Naive thymus-derived CD4-positive, alpha-beta T cell (primary cell): ENCODE measurements at regions of chr14 and their contacts with region 1.

Region 1: DNA sequence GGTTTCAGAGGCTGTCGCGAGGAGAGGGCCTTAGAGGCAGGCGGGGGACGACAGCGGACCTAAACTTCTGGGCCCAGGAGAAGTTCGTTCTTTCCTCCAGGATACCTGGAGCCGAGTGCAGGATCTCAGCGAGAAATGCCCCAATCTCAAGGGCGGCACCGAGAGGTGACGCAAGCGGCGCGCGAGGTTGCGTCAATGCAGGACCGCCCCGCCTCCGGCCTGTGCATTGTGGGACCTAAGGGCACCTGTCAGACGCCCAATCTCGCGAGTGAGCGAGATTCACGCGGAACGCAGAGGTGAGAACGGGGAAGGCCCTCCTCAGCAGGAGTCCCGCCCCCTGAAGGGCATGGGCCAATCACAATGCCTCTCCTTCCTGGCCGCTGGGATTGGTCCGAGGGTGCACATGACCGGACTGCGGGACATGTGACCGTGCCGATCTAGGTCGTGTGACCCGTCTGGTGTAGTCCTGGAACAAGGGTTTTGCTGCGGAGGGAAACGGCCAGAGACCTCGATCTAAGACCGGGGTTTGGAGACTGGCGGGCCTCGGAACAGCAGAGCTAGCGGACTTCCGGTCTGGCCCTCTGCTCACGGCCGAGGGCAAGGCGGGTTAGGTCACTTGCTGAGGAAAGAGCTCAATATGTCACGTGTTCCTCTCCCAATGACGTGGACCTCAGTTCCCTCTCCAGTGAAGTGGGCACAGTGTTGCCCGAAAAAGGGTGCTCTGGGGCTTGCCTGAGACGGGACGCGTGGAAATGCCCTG is 16.3 kb upstream of the DYNC1H1 start:
- DNase-seq: peak; percentile 95 to 100 (median 99)
- ATAC-seq: peak; percentile 97
- H3K4me3 ChIP-seq: peak overlapping the region; percentile 96
- H3K4me3 Mint-ChIP-seq: peak overlapping the region; percentile 86 to 99 (median 98)
- H3K27ac ChIP-seq: peak overlapping the region; percentile 99
- H3K27ac Mint-ChIP-seq: peak overlapping the region; percentile 97 to 100 (median 99)
- H3K4me1 ChIP-seq: peaks cover 9 to 10% of the 10 kb centered on the region in 2 donors
- H3K4me1 Mint-ChIP-seq: peaks cover 17 to 34% (median 25%) of the 10 kb centered on the region in 7 donors
- H3K27me3 ChIP-seq: no peaks in the 10 kb centered on the region
- H3K27me3 Mint-ChIP-seq: peaks cover 15 to 37% (median 30%) of the 10 kb centered on the region in 5 donors

Region 2: GRCh38 chr14:101721951-101722661 is 226.0 kb before region 1 on chr14:
- CTCF ChIA-PET with region 1: no interaction called
- POLR2A ChIA-PET with region 1: no interaction called
- intact Hi-C with region 1: loop called in 1 of 2 experiments (anchors 2 kb)
- DNase-seq: peak; percentile 49 to 93 (median 88)
- ATAC-seq: peak; percentile 86
- H3K4me3 ChIP-seq: peak overlapping the region; percentile 24
- H3K4me3 Mint-ChIP-seq: peak overlapping the region; percentile 73 to 92 (median 80)
- H3K27ac ChIP-seq: peak overlapping the region; percentile 76
- H3K27ac Mint-ChIP-seq: peak overlapping the region; percentile 92 to 99 (median 97)
- H3K4me1 ChIP-seq: peaks cover 34 to 50% of the 10 kb centered on the region in 2 donors
- H3K4me1 Mint-ChIP-seq: peaks cover 17 to 74% (median 52%) of the 10 kb centered on the region in 7 donors
- H3K27me3 ChIP-seq: no peaks in the 10 kb centered on the region
- H3K27me3 Mint-ChIP-seq: no peaks in the 10 kb centered on the region

Region 3: DNA sequence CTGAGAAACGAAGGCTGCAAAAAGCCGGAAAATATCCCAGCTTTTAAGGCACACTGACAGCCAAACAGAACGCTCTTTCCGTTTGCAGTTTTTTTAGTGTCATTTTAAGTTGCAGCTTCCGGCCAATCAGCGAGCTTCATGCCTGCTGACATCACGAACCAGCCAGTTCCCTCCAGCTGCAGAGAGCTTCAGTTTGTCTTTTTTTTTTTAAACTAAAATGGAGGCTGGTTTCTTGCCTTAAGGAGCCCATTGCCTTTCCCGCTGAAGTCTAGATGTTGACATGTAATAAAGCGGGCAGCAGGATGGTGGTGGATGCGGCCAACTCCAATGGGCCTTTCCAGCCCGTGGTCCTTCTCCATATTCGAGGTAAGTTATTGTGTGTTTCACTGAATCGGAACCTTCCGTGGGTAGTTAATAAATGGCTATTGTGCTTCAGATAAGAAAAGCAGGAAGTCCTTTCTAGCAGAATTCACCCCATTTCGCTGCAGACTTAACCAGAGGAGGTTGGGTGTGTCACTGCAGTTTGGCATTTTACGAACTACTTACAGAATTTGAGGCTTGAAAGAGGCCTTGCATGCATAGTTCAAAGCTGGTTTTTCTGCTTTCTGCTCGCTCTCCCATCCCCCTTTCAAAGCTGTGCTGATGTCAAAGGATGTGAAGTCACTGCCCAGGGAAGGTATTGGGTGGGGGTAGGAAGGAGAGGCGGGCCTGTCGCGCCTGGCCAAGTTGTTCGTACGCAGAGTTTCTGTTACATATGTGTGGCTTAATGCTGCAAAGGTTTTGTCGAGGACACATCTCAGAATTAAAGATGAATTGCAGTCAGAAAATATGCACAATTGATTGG is 138.2 kb before region 1 on chr14:
- CTCF ChIA-PET with region 1: no interaction called
- POLR2A ChIA-PET with region 1: interaction called, 6 read pairs
- intact Hi-C with region 1: loop called (anchors 1 kb)
- DNase-seq: peak; percentile 57 to 97 (median 95)
- ATAC-seq: peak; percentile 94
- H3K4me3 ChIP-seq: peak overlapping the region; percentile 92
- H3K4me3 Mint-ChIP-seq: peak overlapping the region; percentile 94 to 98 (median 96)
- H3K27ac ChIP-seq: peak overlapping the region; percentile 99
- H3K27ac Mint-ChIP-seq: peak overlapping the region; percentile 90 to 100 (median 99)
- H3K4me1 ChIP-seq: peaks cover 36 to 38% of the 10 kb centered on the region in 2 donors
- H3K4me1 Mint-ChIP-seq: peaks cover 27 to 62% (median 55%) of the 10 kb centered on the region in 7 donors
- H3K27me3 ChIP-seq: no peaks in the 10 kb centered on the region
- H3K27me3 Mint-ChIP-seq: no peaks in the 10 kb centered on the region

Region 4: GRCh38 chr14:102139248-102140026 is 191.4 kb after region 1 on chr14 and contains the start of gene WDR20:
- CTCF ChIA-PET with region 1: no interaction called
- POLR2A ChIA-PET with region 1: no interaction called
- intact Hi-C with region 1: loop called (anchors 1 kb)
- DNase-seq: peak; percentile 98 to 100 (median 99)
- ATAC-seq: peak; percentile 98
- H3K4me3 ChIP-seq: peak within 1 kb of the TSS; percentile 80
- H3K4me3 Mint-ChIP-seq: peak within 1 kb of the TSS; percentile 96 to 99 (median 98)
- H3K27ac ChIP-seq: peak within 1 kb of the TSS; percentile 90
- H3K27ac Mint-ChIP-seq: peak within 1 kb of the TSS; percentile 95 to 99 (median 96)
- H3K4me1 ChIP-seq: peaks cover 18 to 22% of the 10 kb centered on the region in 2 donors
- H3K4me1 Mint-ChIP-seq: peaks cover 17 to 36% (median 26%) of the 10 kb centered on the region in 7 donors
- H3K27me3 ChIP-seq: no peaks in the 10 kb centered on the region
- H3K27me3 Mint-ChIP-seq: no peaks in the 10 kb centered on the region
- total RNA-seq, gene WDR20: 33.1 to 67.8 (median 47.5) TPM

Region 5: GRCh38 chr14:102362545-102363181 is 414.6 kb after region 1 on chr14 and contains the starts of genes CINP and TECPR2:
- CTCF ChIA-PET with region 1: no interaction called
- POLR2A ChIA-PET with region 1: no interaction called
- intact Hi-C with region 1: loop called (anchors 1 to 2 kb)
- DNase-seq: peak; percentile 88 to 95 (median 92)
- ATAC-seq: peak; percentile 97
- H3K4me3 ChIP-seq: peak within 1 kb of the TSS; percentile 96
- H3K4me3 Mint-ChIP-seq: peak within 1 kb of the TSS in 6 of 10 donors; percentile 92 to 97 (median 95)
- H3K27ac ChIP-seq: peak within 1 kb of the TSS; percentile 87
- H3K27ac Mint-ChIP-seq: peak within 1 kb of the TSS; percentile 82 to 99 (median 96)
- H3K4me1 ChIP-seq: peaks cover 6 to 15% of the 10 kb centered on the region in 2 donors
- H3K4me1 Mint-ChIP-seq: peaks cover 17 to 42% (median 36%) of the 10 kb centered on the region in 7 donors
- H3K27me3 ChIP-seq: no peaks in the 10 kb centered on the region
- H3K27me3 Mint-ChIP-seq: no peaks in the 10 kb centered on the region
- total RNA-seq, gene CINP: 16.8 to 34.4 (median 31.8) TPM
- total RNA-seq, gene TECPR2: 8.7 to 12.9 (median 11.4) TPM